Naive thymus-derived CD4-positive, alpha-beta T cell (primary cell): ENCODE measurements at regions of chr3 and their contacts with region 1.

Region 1: GRCh38 chr3:32374788-32375595 is 16.7 kb upstream of the CMTM7 start:
- DNase-seq: peak in 8 of 9 donors; percentile 50 to 83 (median 77)
- ATAC-seq: peak; percentile 67
- H3K4me3 ChIP-seq: no peak overlapping the region
- H3K4me3 Mint-ChIP-seq: peak overlapping the region in 1 of 10 donors; percentile 37
- H3K27ac ChIP-seq: no peak overlapping the region
- H3K27ac Mint-ChIP-seq: peak overlapping the region; percentile 54 to 97 (median 87)
- H3K4me1 ChIP-seq: peaks cover 0 to 34% of the 10 kb centered on the region in 2 donors
- H3K4me1 Mint-ChIP-seq: peaks cover 15 to 49% (median 38%) of the 10 kb centered on the region in 7 donors
- H3K27me3 ChIP-seq: no peaks in the 10 kb centered on the region
- H3K27me3 Mint-ChIP-seq: peaks cover 0 to 4% (median 0%) of the 10 kb centered on the region in 5 donors

Region 2: DNA sequence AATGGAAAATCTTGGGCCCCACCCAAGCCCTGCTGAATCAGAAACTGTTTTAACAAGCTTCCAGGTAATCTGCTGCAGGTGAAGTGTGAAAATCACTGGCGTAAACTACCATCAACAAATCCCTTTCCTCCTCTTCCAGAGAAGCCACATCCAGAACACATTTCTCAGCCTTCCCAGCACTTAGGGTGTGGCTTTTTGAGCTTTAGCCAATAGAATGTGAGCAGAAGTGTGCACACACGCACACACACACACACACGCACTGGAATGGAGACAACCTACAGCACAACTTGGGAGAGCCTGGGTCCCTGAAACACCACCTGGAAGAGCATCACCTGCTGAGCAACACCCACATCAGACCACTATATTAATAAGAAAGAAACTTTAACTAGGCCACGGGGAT is 492.6 kb before region 1 on chr3:
- CTCF ChIA-PET with region 1: no interaction called
- POLR2A ChIA-PET with region 1: no interaction called
- intact Hi-C with region 1: no loop called
- DNase-seq: no peak
- ATAC-seq: no peak
- H3K4me3 ChIP-seq: no peak overlapping the region
- H3K4me3 Mint-ChIP-seq: no peak overlapping the region
- H3K27ac ChIP-seq: no peak overlapping the region
- H3K27ac Mint-ChIP-seq: no peak overlapping the region
- H3K4me1 ChIP-seq: no peaks in the 10 kb centered on the region
- H3K4me1 Mint-ChIP-seq: no peaks in the 10 kb centered on the region
- H3K27me3 ChIP-seq: no peaks in the 10 kb centered on the region
- H3K27me3 Mint-ChIP-seq: peaks cover 0 to 17% (median 0%) of the 10 kb centered on the region in 5 donors

Region 3: DNA sequence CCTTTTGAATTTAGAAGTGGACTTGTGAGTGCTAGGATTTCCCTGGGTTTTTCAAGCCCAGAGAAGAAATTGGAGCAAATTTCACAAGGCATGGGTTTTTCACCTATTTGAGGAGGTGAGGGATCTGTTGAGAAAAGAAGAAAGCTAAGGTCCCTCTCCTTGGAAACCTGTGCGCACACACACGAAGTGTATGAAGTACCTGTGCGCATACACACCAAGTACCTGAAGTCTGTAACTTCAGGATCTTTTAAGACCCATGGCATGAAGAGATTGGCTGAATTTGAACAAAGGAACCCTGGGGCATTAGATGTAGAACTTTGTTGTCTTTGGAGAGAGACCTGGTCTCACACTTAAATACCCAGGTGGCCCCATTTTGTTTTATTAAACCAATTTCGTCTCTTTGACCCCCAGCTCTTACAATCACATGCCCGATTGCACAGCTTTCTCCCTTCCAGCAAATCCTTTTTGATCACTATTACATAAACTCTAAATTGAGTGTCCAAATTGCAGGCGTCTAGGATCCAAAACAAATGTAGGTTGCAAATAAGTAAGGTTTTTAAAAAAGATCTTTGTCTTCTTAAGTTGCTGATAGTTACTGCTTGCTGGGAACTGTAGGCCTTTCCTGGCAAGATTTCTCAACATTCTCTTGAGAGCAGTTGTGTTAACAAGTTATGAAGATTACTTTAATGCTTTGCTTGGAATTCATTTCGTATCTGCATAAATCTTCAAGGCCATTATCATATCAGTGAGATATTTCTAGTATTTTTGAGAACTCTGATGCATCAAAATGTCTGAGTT is 72.2 kb before region 1 on chr3:
- CTCF ChIA-PET with region 1: interaction called, 10 read pairs
- POLR2A ChIA-PET with region 1: interaction called, 21 read pairs
- intact Hi-C with region 1: loop called in 1 of 2 experiments (anchors 2 kb)
- DNase-seq: peak in 1 of 9 donors; percentile 12
- ATAC-seq: no peak
- H3K4me3 ChIP-seq: peak overlapping the region; percentile 8
- H3K4me3 Mint-ChIP-seq: peak overlapping the region; percentile 72 to 88 (median 80)
- H3K27ac ChIP-seq: peak overlapping the region; percentile 66
- H3K27ac Mint-ChIP-seq: peak overlapping the region; percentile 94 to 99 (median 96)
- H3K4me1 ChIP-seq: peaks cover 29 to 33% of the 10 kb centered on the region in 2 donors
- H3K4me1 Mint-ChIP-seq: peaks cover 27 to 79% (median 70%) of the 10 kb centered on the region in 7 donors
- H3K27me3 ChIP-seq: no peaks in the 10 kb centered on the region
- H3K27me3 Mint-ChIP-seq: no peaks in the 10 kb centered on the region

Region 4: GRCh38 chr3:32406486-32407408 is 31.8 kb after region 1 on chr3:
- CTCF ChIA-PET with region 1: interaction called, 14 read pairs
- POLR2A ChIA-PET with region 1: interaction called, 16 read pairs
- intact Hi-C with region 1: loop called in 1 of 2 experiments (anchors 5 kb)
- DNase-seq: peak in 1 of 9 donors; percentile 10
- ATAC-seq: peak; percentile 44
- H3K4me3 ChIP-seq: no peak overlapping the region
- H3K4me3 Mint-ChIP-seq: peak overlapping the region in 7 of 10 donors; percentile 10 to 64 (median 26)
- H3K27ac ChIP-seq: no peak overlapping the region
- H3K27ac Mint-ChIP-seq: peak overlapping the region in 8 of 9 donors; percentile 16 to 100 (median 74)
- H3K4me1 ChIP-seq: peaks cover 15 to 43% of the 10 kb centered on the region in 2 donors
- H3K4me1 Mint-ChIP-seq: peaks cover 45 to 95% (median 88%) of the 10 kb centered on the region in 7 donors
- H3K27me3 ChIP-seq: no peaks in the 10 kb centered on the region
- H3K27me3 Mint-ChIP-seq: no peaks in the 10 kb centered on the region

Region 5: GRCh38 chr3:32428092-32429068 is 53.4 kb after region 1 on chr3:
- CTCF ChIA-PET with region 1: interaction called, 15 read pairs
- POLR2A ChIA-PET with region 1: interaction called, 15 read pairs
- intact Hi-C with region 1: loop called in 1 of 2 experiments (anchors 2 kb)
- DNase-seq: peak in 7 of 9 donors; percentile 45 to 58 (median 56)
- ATAC-seq: peak; percentile 73
- H3K4me3 ChIP-seq: peak overlapping the region; percentile 30
- H3K4me3 Mint-ChIP-seq: peak overlapping the region; percentile 60 to 85 (median 81)
- H3K27ac ChIP-seq: peak overlapping the region; percentile 76
- H3K27ac Mint-ChIP-seq: peak overlapping the region; percentile 81 to 100 (median 98)
- H3K4me1 ChIP-seq: peaks cover 83% of the 10 kb centered on the region in 2 donors
- H3K4me1 Mint-ChIP-seq: peaks cover 64 to 100% (median 90%) of the 10 kb centered on the region in 7 donors
- H3K27me3 ChIP-seq: no peaks in the 10 kb centered on the region
- H3K27me3 Mint-ChIP-seq: no peaks in the 10 kb centered on the region

Region 6: GRCh38 chr3:32502118-32502945 is 127.3 kb after region 1 on chr3 and contains the start of gene CMTM6:
- CTCF ChIA-PET with region 1: interaction called, 8 read pairs
- POLR2A ChIA-PET with region 1: interaction called, 5 read pairs
- intact Hi-C with region 1: loop called in 1 of 2 experiments (anchors 1 kb)
- DNase-seq: peak; percentile 49 to 77 (median 70)
- ATAC-seq: peak; percentile 92
- H3K4me3 ChIP-seq: peak within 1 kb of the TSS; percentile 89
- H3K4me3 Mint-ChIP-seq: peak within 1 kb of the TSS; percentile 79 to 97 (median 93)
- H3K27ac ChIP-seq: peak within 1 kb of the TSS; percentile 98
- H3K27ac Mint-ChIP-seq: peak within 1 kb of the TSS; percentile 86 to 98 (median 90)
- H3K4me1 ChIP-seq: peaks cover 6 to 23% of the 10 kb centered on the region in 2 donors
- H3K4me1 Mint-ChIP-seq: peaks cover 28 to 48% (median 43%) of the 10 kb centered on the region in 7 donors
- H3K27me3 ChIP-seq: no peaks in the 10 kb centered on the region
- H3K27me3 Mint-ChIP-seq: peaks cover 0 to 4% (median 0%) of the 10 kb centered on the region in 5 donors
- total RNA-seq, gene CMTM6: 24.1 to 61.1 (median 38.1) TPM

Region 7: GRCh38 chr3:32684800-32685542 is 310.0 kb after region 1 on chr3 and contains the start of gene CNOT10:
- CTCF ChIA-PET with region 1: no interaction called
- POLR2A ChIA-PET with region 1: no interaction called
- intact Hi-C with region 1: no loop called
- DNase-seq: peak; percentile 93 to 96 (median 95)
- ATAC-seq: peak; percentile 97
- H3K4me3 ChIP-seq: peak within 1 kb of the TSS; percentile 63
- H3K4me3 Mint-ChIP-seq: peak within 1 kb of the TSS; percentile 82 to 94 (median 92)
- H3K27ac ChIP-seq: peak within 1 kb of the TSS; percentile 86
- H3K27ac Mint-ChIP-seq: peak within 1 kb of the TSS; percentile 91 to 97 (median 96)
- H3K4me1 ChIP-seq: peaks cover 17 to 21% of the 10 kb centered on the region in 2 donors
- H3K4me1 Mint-ChIP-seq: peaks cover 25 to 44% (median 40%) of the 10 kb centered on the region in 7 donors
- H3K27me3 ChIP-seq: no peaks in the 10 kb centered on the region
- H3K27me3 Mint-ChIP-seq: peaks cover 0 to 5% (median 0%) of the 10 kb centered on the region in 5 donors
- total RNA-seq, gene CNOT10: 37.9 to 69.4 (median 46.9) TPM

Region 8: DNA sequence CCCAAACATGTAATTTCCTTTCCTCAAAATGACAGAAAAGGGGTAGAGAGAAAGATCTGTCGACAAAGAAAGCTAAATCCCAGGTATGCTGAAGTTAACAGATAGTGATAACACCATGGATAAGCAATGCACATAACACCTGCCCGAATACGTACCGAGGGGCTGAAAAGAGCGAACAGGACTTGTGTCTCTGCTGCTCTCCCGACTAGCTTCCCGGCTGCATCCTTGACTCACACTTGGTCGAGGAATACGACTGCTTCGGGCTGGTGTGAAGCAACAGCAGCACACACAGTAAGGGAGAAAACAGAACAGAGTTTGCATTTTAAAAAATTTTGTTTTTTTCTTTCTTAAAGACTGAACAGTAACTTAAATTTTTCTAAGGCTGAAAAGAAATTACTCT is 1206.7 kb after region 1 on chr3:
- CTCF ChIA-PET with region 1: no interaction called
- POLR2A ChIA-PET with region 1: no interaction called
- intact Hi-C with region 1: no loop called
- DNase-seq: no peak
- ATAC-seq: no peak
- H3K4me3 ChIP-seq: no peak overlapping the region
- H3K4me3 Mint-ChIP-seq: no peak overlapping the region
- H3K27ac ChIP-seq: no peak overlapping the region
- H3K27ac Mint-ChIP-seq: no peak overlapping the region
- H3K4me1 ChIP-seq: no peaks in the 10 kb centered on the region
- H3K4me1 Mint-ChIP-seq: no peaks in the 10 kb centered on the region
- H3K27me3 ChIP-seq: no peaks in the 10 kb centered on the region
- H3K27me3 Mint-ChIP-seq: no peaks in the 10 kb centered on the region